Activated CD8-positive, alpha-beta T cell treated with anti-CD3 and anti-CD28 coated beads for 36 hours (primary cell): ENCODE measurements at regions of chr11 and their contacts with region 1.

Region 1: GRCh38 chr11:66311965-66312548 is 4.8 kb downstream of the CD248 start:
- DNase-seq: peak; percentile 99
- ATAC-seq: peak; percentile 68
- H3K4me3 Mint-ChIP-seq: peak overlapping the region; percentile 80
- H3K27ac Mint-ChIP-seq: peak overlapping the region; percentile 97
- H3K4me1 Mint-ChIP-seq: peaks cover 26% of the 10 kb centered on the region
- H3K27me3 Mint-ChIP-seq: no peaks in the 10 kb centered on the region
- CTCF ChIP-seq: peak; percentile 33

Region 2: GRCh38 chr11:66282468-66283386 is 29.3 kb before region 1 on chr11:
- CTCF ChIA-PET with region 1: interaction called, 27 read pairs
- POLR2A ChIA-PET with region 1: interaction called, 4 read pairs
- intact Hi-C with region 1: no loop called
- DNase-seq: peak; percentile 100
- ATAC-seq: peak; percentile 89
- H3K4me3 Mint-ChIP-seq: peak overlapping the region; percentile 19
- H3K27ac Mint-ChIP-seq: peak overlapping the region; percentile 38
- H3K4me1 Mint-ChIP-seq: peaks cover 33% of the 10 kb centered on the region
- H3K27me3 Mint-ChIP-seq: peaks cover 1% of the 10 kb centered on the region
- CTCF ChIP-seq: peak; percentile 91

Region 3: GRCh38 chr11:66288671-66289547 is 23.1 kb before region 1 on chr11 and contains the start of gene YIF1A:
- CTCF ChIA-PET with region 1: interaction called, 27 read pairs
- POLR2A ChIA-PET with region 1: interaction called, 9 read pairs
- intact Hi-C with region 1: no loop called
- DNase-seq: peak; percentile 99
- ATAC-seq: peak; percentile 96
- H3K4me3 Mint-ChIP-seq: peak within 1 kb of the TSS; percentile 85
- H3K27ac Mint-ChIP-seq: peak within 1 kb of the TSS; percentile 89
- H3K4me1 Mint-ChIP-seq: peaks cover 31% of the 10 kb centered on the region
- H3K27me3 Mint-ChIP-seq: peaks cover 17% of the 10 kb centered on the region
- CTCF ChIP-seq: no peak
- total RNA-seq, gene YIF1A: 57.4 to 64.0 TPM

Region 4: DNA sequence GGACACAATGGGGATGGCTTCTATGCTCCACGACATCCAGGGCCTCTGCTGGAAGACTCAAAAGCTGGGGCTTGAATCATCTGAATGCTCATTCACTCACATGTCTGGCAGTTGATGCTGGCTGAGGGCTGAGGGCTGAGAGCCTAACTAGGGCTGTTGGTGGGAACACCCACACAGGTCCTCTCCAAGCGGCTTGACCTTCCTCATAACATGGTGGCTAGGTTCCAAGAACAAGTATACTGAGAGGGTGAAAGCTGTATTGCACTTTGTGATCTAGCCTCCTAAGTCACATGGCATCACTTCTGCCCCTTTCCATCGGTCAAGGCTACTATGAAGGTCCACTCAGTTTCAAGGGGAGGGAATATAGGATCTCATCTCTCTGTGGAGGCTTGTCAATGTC is 12.9 kb before region 1 on chr11:
- CTCF ChIA-PET with region 1: interaction called, 37 read pairs
- POLR2A ChIA-PET with region 1: interaction called, 4 read pairs
- intact Hi-C with region 1: no loop called
- DNase-seq: no peak
- ATAC-seq: no peak
- H3K4me3 Mint-ChIP-seq: no peak overlapping the region
- H3K27ac Mint-ChIP-seq: no peak overlapping the region
- H3K4me1 Mint-ChIP-seq: no peaks in the 10 kb centered on the region
- H3K27me3 Mint-ChIP-seq: no peaks in the 10 kb centered on the region
- CTCF ChIP-seq: no peak

Region 5: GRCh38 chr11:66326261-66327111 is 14.4 kb after region 1 on chr11:
- CTCF ChIA-PET with region 1: interaction called, 133 read pairs
- POLR2A ChIA-PET with region 1: interaction called, 21 read pairs
- intact Hi-C with region 1: no loop called
- DNase-seq: peak; percentile 85
- ATAC-seq: peak; percentile 70
- H3K4me3 Mint-ChIP-seq: peak overlapping the region; percentile 15
- H3K27ac Mint-ChIP-seq: peak overlapping the region; percentile 84
- H3K4me1 Mint-ChIP-seq: peaks cover 59% of the 10 kb centered on the region
- H3K27me3 Mint-ChIP-seq: no peaks in the 10 kb centered on the region
- CTCF ChIP-seq: no peak

Region 6: GRCh38 chr11:66336234-66337102 is 24.4 kb after region 1 on chr11 and contains the start of gene RIN1:
- CTCF ChIA-PET with region 1: interaction called, 133 read pairs
- POLR2A ChIA-PET with region 1: interaction called, 38 read pairs
- intact Hi-C with region 1: no loop called
- DNase-seq: peak; percentile 91
- ATAC-seq: peak; percentile 84
- H3K4me3 Mint-ChIP-seq: peak within 1 kb of the TSS; percentile 66
- H3K27ac Mint-ChIP-seq: peak within 1 kb of the TSS; percentile 85
- H3K4me1 Mint-ChIP-seq: peaks cover 33% of the 10 kb centered on the region
- H3K27me3 Mint-ChIP-seq: no peaks in the 10 kb centered on the region
- CTCF ChIP-seq: no peak
- total RNA-seq, gene RIN1: 1.1 to 1.6 TPM

Region 7: DNA sequence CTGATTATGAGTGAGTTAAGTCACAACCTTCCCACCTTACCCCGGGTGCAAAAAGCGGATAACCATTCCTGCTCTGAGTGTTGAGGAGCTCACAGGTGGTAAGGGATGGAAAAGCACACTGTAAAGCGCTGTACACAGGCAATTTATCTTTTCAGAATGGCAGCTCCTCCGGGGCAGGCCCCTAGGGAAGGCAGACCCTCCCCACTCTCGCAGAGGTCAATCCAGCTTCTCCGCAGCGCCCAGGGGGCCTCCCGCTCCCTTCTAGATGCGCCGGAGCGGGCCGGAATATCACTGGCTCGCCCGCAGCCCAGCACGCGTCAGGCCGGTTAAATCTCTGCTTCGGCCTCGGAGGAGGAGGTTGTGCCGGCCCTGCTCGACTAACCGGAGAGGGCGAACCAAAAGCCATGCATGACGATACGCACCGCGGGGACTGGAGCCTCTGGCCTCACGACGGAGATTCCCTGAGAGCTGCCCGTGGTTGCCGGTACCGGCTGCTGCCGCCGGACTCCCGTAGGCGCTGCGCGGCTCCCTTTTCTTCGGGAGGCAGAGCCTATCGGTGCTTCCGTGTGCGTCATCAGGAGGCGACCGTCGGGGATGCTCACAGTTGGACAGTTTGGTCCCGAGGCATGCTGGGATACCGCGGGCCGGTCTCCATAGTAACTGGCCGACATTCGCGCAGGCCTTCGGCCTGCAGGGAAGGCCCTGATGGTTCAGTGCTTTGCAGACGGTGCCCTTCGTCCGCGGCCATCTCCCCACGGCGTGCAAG is 32.7 kb after region 1 on chr11 and contains the start of gene BRMS1:
- CTCF ChIA-PET with region 1: interaction called, 44 read pairs
- POLR2A ChIA-PET with region 1: interaction called, 11 read pairs
- intact Hi-C with region 1: loop called (anchors 5 kb)
- DNase-seq: peak; percentile 99
- ATAC-seq: peak; percentile 78
- H3K4me3 Mint-ChIP-seq: peak within 1 kb of the TSS; percentile 95
- H3K27ac Mint-ChIP-seq: peak within 1 kb of the TSS; percentile 92
- H3K4me1 Mint-ChIP-seq: peaks cover 43% of the 10 kb centered on the region
- H3K27me3 Mint-ChIP-seq: peaks cover 2% of the 10 kb centered on the region
- CTCF ChIP-seq: peak; percentile 14
- total RNA-seq, gene BRMS1: 35.7 to 35.9 TPM